ENCODE measurements at regions of chr21 and their contacts with region 1.

Region 1: GRCh38 chr21:29181799-29182470 is 51.5 kb downstream of the MAP3K7CL start:
- DNase-seq: no peak
- H3K4me3 Mint-ChIP-seq: peak overlapping the region; percentile 59
- H3K27ac Mint-ChIP-seq: peak overlapping the region; percentile 82
- H3K4me1 Mint-ChIP-seq: peaks cover 17% of the 10 kb centered on the region
- H3K27me3 Mint-ChIP-seq: no peaks in the 10 kb centered on the region

Region 2: DNA sequence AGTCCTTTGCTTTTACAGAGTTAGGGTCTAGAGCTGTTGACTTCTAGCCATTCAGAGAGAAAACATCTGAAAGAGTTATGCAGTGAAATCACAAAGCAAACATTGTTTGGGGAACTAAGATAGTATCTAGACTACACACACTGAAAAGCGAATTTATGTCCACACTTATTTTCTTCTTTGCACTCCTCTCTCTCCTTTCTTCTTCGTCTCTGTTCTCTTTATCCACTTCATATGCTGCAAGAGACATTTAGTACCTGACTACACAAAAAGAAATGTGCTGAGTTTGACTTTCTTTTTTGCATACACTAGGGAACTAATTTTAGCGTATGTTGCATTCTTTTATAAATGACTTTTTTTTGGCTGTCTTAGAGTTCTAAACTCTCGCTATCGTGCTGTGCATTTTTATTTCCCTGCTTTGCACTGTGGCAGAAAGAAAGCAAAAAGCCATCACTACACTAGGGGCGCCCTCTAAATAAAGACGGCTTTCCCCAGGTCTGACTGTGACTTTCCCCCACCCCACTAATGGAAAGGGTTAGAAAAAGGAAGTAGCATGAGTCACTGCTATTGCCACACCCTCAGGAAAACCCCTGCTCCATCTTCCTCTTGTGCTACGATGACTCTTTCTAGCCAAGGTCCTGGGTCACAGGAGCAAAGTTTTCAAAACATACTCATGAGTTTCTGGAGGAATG is 14.2 kb after region 1 on chr21:
- CTCF ChIA-PET with region 1: interaction called, 3 read pairs
- POLR2A ChIA-PET with region 1: no interaction called
- intact Hi-C with region 1: loop called (anchors 1 kb)
- DNase-seq: peak; percentile 85
- H3K4me3 Mint-ChIP-seq: peak overlapping the region; percentile 70
- H3K27ac Mint-ChIP-seq: peak overlapping the region; percentile 80
- H3K4me1 Mint-ChIP-seq: peaks cover 34% of the 10 kb centered on the region
- H3K27me3 Mint-ChIP-seq: peaks cover 3% of the 10 kb centered on the region

Region 3: DNA sequence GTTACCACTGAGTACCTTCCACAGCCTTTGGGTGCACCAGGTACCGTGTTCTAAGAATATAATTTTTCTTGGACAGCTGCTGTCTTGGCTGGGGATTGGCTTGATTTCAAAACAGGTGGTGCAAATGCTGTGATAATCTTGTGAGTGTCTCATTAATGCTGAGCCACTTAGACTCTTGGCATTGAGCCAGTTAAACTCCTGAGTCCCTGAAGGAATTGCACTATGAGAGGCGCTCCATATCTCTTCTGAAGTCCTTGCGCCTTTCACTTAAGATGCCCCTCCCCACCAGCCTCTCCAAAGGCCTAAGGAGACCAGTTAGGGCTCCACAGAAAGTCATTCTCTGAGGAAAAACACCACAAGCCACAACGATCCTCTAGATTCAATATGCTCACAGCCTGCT is 167.8 kb after region 1 on chr21:
- CTCF ChIA-PET with region 1: interaction called, 4 read pairs
- POLR2A ChIA-PET with region 1: no interaction called
- intact Hi-C with region 1: loop called (anchors 2 kb)
- DNase-seq: no peak
- H3K4me3 Mint-ChIP-seq: no peak overlapping the region
- H3K27ac Mint-ChIP-seq: no peak overlapping the region
- H3K4me1 Mint-ChIP-seq: peaks cover 17% of the 10 kb centered on the region
- H3K27me3 Mint-ChIP-seq: no peaks in the 10 kb centered on the region